Cardiac septum (tissue), 1 donor: ENCODE measurements at regions of chr13 and their contacts with region 1.

Region 1: DNA sequence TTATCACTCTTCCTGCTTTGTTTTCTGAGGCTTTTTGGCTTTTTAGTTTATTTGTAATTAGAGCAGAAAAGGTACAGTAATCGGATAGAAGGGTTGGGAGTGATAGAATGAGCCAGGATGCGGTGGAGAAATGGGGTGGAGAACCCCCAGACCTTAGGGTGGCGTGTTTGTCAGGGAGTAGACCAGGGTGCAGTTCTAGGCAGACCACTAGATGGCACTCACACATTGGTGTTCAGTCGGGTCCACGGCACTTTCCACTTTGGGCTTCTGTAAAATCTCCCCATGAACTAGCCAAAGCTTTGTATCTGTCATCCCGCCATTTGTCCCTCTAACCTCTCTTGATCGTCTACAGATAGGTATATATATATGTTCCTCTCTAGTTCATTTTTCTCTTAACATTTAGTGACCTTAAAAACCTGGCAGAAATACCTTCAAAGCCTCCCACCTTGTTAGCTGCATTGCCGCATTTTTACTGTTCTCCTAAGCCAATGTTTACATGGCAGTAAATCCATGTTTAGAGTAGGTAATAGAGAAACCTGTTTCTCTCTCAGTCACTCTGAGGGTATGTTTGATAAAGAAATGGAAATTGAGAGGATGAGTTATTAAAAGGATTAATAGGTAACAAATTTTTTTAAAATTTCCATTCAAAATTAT is 154.9 kb downstream of the TM9SF2 start:
- DNase-seq: peak; percentile 82

Region 2: GRCh38 chr13:99916366-99917103 is 260.3 kb after region 1 on chr13:
- intact Hi-C with region 1: loop called (anchors 5 kb)
- DNase-seq: no peak

Region 3: DNA sequence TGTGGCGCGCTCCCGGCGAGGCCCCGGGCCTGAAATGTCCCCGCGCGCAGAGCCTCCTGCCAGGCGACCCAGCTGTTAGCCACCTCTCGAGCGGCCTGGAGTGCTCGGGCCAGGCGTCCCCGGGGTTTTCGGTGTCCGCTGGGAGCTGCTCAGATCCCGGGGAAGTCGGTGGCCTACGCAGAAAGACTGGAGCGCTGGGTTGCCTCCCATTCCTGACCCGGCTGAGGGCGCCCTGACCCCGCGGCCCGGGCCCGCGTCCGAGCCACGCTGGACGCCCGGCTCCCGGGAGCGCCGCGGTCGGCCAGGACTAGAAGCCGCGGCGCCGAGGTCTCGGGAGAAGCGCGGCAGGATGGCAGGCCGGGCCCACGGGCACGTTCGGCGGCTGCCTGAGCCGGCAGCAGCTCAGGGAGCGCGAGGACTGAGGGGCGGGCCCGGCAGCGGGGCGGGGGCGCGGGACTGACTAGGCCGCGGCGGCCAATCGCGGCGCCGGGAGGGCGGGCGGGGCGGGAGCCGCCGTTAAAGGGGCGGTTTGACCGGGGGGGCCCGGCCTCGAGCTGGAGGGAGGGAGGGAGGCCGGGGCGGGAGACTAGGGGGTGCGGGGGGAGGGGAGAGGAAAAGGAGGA is 324.1 kb after region 1 on chr13:
- intact Hi-C with region 1: loop called (anchors 5 kb)
- DNase-seq: no peak

Region 4: DNA sequence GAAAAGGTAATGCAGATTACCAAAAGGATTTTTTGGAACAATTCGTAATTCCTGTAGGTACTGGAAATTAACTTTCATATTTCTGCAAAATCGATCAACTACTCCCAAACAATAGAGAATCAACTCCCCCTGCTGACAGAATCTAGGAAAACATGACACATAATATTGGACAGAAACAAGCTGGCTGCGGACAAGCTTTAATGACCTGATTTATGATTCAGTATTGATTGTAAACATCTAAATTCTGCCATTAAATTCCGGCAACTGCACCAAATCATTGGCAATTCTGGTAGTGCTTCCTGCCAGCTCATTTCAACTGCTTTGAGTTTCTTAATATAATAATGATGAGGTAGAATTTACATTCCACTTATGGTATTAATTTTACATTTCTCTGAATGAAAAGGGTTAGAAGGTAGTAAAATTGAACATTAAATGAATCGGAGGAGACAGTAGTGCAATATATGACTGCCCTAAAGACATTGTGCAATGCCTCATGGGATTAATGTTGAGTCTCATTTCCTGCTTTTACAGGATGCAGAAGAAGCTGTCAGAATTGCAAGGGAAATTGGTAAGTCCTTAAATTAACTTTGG is 579.2 kb after region 1 on chr13:
- intact Hi-C with region 1: loop called (anchors 2 kb)
- DNase-seq: no peak

Region 5: DNA sequence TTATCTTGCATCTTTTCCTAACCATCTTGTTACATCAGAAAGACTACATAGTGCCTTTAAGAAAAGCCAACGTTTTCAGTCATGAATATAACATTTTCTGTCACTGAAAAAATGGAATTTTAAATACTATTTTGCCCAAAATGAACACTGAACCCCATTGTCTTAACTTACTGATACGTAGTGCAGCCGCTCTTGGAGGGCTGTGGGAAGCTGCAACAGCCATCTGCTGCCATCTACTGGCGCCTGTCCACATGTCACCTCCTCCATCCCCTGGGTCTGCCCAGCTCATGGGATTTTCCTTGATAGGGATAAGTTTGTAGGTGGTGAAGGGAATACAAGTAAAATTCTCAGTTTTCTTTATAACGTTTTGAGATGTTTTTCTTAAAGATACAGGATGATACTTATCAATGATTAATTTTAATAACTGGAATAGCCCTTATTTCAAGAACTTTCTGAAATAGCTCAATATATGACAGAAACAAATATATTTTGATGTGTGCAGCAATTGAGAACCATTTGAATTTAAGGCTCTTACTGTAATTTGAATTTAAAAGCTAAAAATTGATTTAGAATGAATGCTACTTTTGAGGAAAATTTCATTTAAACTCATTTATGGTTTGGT is 858.7 kb after region 1 on chr13:
- intact Hi-C with region 1: loop called (anchors 2 kb)
- DNase-seq: peak; percentile 86